ENCODE measurements at regions of chrX and their contacts with region 1.

Region 1: DNA sequence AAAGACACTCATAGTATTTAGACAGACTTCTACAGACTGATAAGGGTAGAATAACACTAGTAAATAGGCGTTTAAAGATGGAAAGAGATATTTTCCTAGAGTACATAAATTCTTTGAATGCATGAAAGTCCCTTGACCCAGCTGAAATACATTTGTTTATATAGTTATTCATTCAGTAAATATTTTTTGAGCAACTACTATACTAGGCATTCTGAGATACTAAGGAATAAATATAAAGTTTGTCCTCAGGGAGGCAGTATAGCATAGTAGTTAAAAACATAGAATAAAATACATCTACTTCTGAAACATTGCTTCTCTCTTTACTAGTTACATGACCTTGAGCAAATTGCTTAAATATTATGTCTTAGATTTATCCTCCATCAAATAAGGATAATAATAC is 27.4 kb downstream of the HMGN5 start:
- DNase-seq: no peak
- H3K4me3 ChIP-seq: no peak overlapping the region
- H3K27ac ChIP-seq: no peak overlapping the region
- H3K4me1 ChIP-seq: no peaks in the 10 kb centered on the region
- H3K27me3 ChIP-seq: no peaks in the 10 kb centered on the region
- CTCF ChIP-seq: peak in 2 of 4 experiments; percentile 21 to 33
- POLR2A ChIP-seq: no peak

Region 2: GRCh38 chrX:81054904-81055303 is 119.4 kb before region 1 on chrX:
- intact Hi-C with region 1: no loop called
- DNase-seq: no peak
- H3K4me3 ChIP-seq: no peak overlapping the region
- H3K27ac ChIP-seq: no peak overlapping the region
- H3K4me1 ChIP-seq: no peaks in the 10 kb centered on the region
- H3K27me3 ChIP-seq: no peaks in the 10 kb centered on the region
- CTCF ChIP-seq: no peak
- POLR2A ChIP-seq: no peak

Region 3: DNA sequence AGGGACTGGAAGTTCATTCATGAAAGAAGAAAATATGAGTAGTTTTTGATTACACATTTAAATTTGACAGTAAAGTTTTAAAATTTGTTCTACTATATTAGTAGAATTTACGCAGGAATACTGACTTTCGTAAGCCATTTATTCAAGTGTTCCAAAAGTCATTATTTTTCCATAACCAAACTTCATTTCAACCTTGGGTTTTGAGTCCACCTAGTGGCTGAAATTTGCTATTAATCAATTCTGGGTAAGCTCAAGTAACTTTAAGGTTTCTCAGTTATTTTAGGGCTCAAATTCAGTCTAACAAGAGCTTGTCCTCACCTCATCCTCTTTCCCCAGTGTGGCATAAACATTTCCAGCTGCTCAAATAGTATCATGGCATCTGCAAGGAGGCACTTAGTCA is 203.0 kb after region 1 on chrX:
- intact Hi-C with region 1: loop called (anchors 10 kb)
- DNase-seq: no peak
- H3K4me3 ChIP-seq: no peak overlapping the region
- H3K27ac ChIP-seq: no peak overlapping the region
- H3K4me1 ChIP-seq: no peaks in the 10 kb centered on the region
- H3K27me3 ChIP-seq: no peaks in the 10 kb centered on the region
- CTCF ChIP-seq: peak in 3 of 4 experiments; percentile 38 to 47 (median 46)
- POLR2A ChIP-seq: no peak